Gastrocnemius medialis (tissue), 4 donors: ENCODE measurements at regions of chr2 and their contacts with region 1.

Region 1: DNA sequence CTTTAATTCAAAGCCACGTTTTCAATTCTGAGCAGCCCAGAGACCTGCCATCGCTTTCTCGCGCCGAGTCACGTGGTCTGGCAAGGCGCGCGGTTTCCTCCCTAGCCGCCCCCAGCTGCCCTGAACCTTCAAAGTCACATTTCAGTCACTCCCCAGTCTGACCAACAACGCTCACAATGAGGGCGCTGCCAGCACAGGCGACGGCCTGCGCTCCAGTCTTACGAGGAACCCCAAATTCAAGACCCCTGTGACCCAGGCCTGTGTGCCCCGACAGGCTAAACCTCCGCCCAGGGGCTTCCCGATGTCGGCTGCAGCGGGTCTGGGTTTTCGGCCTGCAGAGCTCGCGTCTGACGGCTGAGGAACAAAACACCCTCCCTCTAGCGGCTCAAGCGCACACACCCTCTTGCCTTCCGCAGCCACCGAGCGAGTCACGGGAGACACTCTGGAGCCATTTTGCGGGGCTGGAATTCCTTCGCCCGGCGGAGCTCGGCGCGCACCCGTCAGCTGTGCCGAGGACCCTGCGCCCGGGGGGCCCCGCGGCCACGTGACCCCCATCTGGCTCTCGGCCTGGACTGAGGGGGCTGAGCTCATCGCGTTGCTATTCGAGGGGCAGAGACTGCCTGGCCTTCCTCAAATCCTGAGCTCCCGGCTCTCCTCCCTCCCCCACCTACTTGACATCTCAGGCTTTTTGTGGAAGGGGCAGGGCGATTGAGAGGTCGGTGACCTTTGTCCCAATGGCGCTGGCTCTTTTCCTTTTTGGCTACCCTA is 69.9 kb upstream of the ITGB6 start:
- DNase-seq: peak; percentile 80 to 87
- ATAC-seq: peak; percentile 85 to 93
- H3K4me3 ChIP-seq: peak overlapping the region; percentile 62 to 84 (median 74)
- H3K27ac ChIP-seq: peak overlapping the region; percentile 93 to 99 (median 98)
- H3K4me1 ChIP-seq: peaks cover 11 to 24% of the 10 kb centered on the region in 2 donors
- H3K27me3 ChIP-seq: no peaks in the 10 kb centered on the region
- CTCF ChIP-seq: peak; percentile 69 to 88 (median 86)
- POLR2A ChIP-seq: peak; percentile 61 to 63

Region 2: DNA sequence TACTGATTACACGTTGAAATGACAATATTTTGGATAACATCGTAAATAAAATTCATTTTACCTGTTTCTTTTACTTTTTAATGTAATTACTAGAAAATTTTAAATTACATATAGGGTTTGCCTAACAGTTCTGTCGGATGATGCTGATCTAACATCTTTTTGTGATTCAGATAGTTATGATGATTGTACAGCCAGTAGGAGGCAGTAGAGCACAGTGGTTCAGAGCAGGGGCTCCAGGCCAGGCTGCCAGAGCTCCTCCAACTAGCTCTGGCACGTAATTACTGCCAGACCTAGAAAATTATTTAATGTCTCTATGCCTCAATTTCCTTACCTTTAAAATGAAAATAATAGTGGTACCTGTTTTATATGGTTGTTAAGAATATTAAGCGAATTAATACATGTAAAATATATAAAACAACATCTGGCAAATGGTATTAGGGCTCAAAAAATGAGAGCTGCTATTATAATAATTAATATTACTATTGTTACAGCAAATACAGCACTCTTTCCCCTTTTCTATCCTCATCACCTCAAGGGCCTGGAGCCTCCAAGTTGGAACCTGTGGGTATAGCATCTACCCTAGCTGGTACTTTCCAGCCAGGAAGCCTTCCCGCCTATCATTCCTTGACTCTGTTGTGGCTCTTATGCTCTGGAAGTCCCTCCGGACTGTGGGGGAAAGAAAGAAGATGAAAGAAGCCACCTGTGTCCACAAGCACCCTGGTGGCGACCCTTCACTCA is 159.9 kb before region 1 on chr2:
- in situ Hi-C with region 1: no loop called
- intact Hi-C with region 1: loop called (anchors 10 kb)
- DNase-seq: peak; percentile 28 to 62
- ATAC-seq: peak; percentile 88 to 97
- H3K4me3 ChIP-seq: no peak overlapping the region
- H3K27ac ChIP-seq: peak overlapping the region in 2 of 4 donors; percentile 6 to 44
- H3K4me1 ChIP-seq: no peaks in the 10 kb centered on the region
- H3K27me3 ChIP-seq: no peaks in the 10 kb centered on the region
- CTCF ChIP-seq: peak; percentile 65 to 86 (median 75)
- POLR2A ChIP-seq: no peak

Region 3: GRCh38 chr2:160207804-160208661 is 62.0 kb before region 1 on chr2:
- in situ Hi-C with region 1: no loop called
- intact Hi-C with region 1: loop called (anchors 2 kb)
- DNase-seq: peak; percentile 53 to 87
- ATAC-seq: peak; percentile 64 to 72
- H3K4me3 ChIP-seq: peak overlapping the region in 3 of 4 donors; percentile 20 to 39 (median 21)
- H3K27ac ChIP-seq: peak overlapping the region; percentile 78 to 88 (median 83)
- H3K4me1 ChIP-seq: peaks cover 36 to 37% of the 10 kb centered on the region in 2 donors
- H3K27me3 ChIP-seq: no peaks in the 10 kb centered on the region
- CTCF ChIP-seq: no peak
- POLR2A ChIP-seq: peak in 1 of 2 donors; percentile 27

Region 4: GRCh38 chr2:160221749-160222148 is 48.2 kb before region 1 on chr2:
- in situ Hi-C with region 1: no loop called
- intact Hi-C with region 1: no loop called
- DNase-seq: peak; percentile 31 to 61
- ATAC-seq: peak; percentile 32 to 42
- H3K4me3 ChIP-seq: no peak overlapping the region
- H3K27ac ChIP-seq: peak overlapping the region; percentile 83 to 93 (median 87)
- H3K4me1 ChIP-seq: peaks cover 71 to 72% of the 10 kb centered on the region in 2 donors
- H3K27me3 ChIP-seq: no peaks in the 10 kb centered on the region
- CTCF ChIP-seq: no peak
- POLR2A ChIP-seq: no peak

Region 5: GRCh38 chr2:160252278-160252887 is 17.6 kb before region 1 on chr2:
- in situ Hi-C with region 1: no loop called
- intact Hi-C with region 1: loop called (anchors 1 kb)
- DNase-seq: no peak
- ATAC-seq: peak; percentile 45
- H3K4me3 ChIP-seq: peak overlapping the region; percentile 38 to 54 (median 48)
- H3K27ac ChIP-seq: peak overlapping the region; percentile 67 to 87 (median 84)
- H3K4me1 ChIP-seq: peaks cover 51 to 60% of the 10 kb centered on the region in 2 donors
- H3K27me3 ChIP-seq: no peaks in the 10 kb centered on the region
- CTCF ChIP-seq: peak; percentile 69 to 93 (median 82)
- POLR2A ChIP-seq: no peak

Region 6: DNA sequence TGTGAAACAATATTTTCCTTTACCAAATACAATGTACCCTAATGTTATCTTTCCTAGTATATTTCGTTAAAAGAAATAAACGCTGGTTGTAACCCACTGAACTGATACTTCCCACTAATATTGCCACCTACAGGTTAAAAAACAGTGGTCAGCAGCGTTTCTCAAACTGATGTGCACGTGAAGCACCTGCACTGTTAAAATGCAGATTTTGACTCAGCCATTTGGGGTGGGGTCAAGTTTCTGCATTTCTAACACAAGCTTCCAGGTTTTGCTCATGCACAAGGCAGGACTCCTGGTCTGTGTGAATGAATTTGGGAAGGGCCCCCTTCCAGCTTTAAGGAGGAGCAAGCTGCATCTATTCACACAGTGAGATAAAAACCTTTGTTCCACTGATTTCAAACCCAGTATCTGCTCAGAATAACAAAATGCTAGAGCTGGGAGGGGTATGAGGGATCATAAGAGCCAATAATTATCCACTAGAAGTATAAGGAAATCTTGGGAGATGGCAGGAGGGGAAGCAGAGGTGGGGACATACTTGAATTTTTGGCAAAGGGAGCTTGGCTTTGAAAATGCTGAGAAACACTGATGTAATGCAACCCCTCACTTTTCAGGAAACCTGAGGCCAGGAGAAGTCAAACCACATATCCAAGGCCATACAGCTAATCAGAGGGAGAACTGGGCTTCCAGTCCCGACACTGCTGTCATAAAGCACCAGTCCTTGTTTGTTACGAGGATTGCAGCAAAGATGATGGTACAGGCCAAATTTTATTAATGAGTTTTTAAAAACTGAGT is 107.4 kb after region 1 on chr2:
- in situ Hi-C with region 1: no loop called
- intact Hi-C with region 1: no loop called
- DNase-seq: no peak
- ATAC-seq: no peak
- H3K4me3 ChIP-seq: no peak overlapping the region
- H3K27ac ChIP-seq: peak overlapping the region in 1 of 4 donors; percentile 4
- H3K4me1 ChIP-seq: peaks cover 91 to 98% of the 10 kb centered on the region in 2 donors
- H3K27me3 ChIP-seq: no peaks in the 10 kb centered on the region
- CTCF ChIP-seq: no peak
- POLR2A ChIP-seq: no peak

Region 7: GRCh38 chr2:160387558-160388262 is 117.7 kb after region 1 on chr2:
- in situ Hi-C with region 1: no loop called
- intact Hi-C with region 1: no loop called
- DNase-seq: peak; percentile 58 to 78
- ATAC-seq: peak; percentile 85 to 89
- H3K4me3 ChIP-seq: peak overlapping the region in 2 of 4 donors; percentile 14 to 26
- H3K27ac ChIP-seq: peak overlapping the region; percentile 68 to 76 (median 75)
- H3K4me1 ChIP-seq: peaks cover 48 to 63% of the 10 kb centered on the region in 2 donors
- H3K27me3 ChIP-seq: no peaks in the 10 kb centered on the region
- CTCF ChIP-seq: no peak
- POLR2A ChIP-seq: peak in 1 of 2 donors; percentile 8

Region 8: DNA sequence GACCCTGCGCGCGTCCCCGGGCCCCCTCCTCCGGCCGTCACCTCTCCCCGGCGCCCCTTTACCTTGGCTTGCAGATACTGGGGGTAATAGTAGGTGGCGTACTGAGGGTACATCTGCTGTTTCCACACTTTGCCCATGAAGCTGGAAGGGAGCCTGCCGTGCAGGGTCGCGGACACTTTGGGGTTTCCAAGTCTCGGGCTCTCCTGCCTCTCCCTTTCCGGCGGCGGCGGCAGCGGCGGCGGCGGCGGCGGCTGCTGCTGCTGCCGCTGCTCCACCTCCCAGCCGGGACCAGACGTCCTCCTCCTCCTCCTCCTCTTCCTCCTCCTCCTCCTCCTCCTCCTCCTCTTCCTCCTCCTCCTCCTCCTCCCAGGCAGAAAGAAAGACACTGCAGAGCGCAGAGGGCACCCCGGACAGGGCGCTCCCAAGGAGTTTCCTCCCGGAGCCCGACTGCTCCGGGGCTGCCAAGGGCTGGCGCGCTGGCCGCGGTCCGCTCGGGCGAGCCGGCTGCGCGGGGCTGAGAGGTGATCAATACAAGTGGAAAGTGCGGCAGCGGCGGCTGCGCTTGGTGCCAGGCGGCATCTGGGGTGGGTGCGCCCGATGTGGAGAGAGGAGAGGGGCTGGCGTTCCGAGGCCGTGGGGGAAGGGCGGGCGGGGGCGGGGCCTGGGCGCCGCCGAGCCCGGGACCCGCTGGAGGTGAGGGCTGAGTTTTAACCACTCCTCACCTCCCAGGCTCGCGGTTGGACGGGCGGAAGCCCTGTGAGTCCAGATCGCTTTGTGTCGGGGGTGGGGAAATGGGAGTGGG is 223.4 kb after region 1 on chr2 and contains the start of gene RBMS1:
- in situ Hi-C with region 1: no loop called
- intact Hi-C with region 1: loop called (anchors 5 kb)
- DNase-seq: peak; percentile 22 to 40
- ATAC-seq: peak; percentile 48 to 60
- H3K4me3 ChIP-seq: peak within 1 kb of the TSS; percentile 84 to 99 (median 98)
- H3K27ac ChIP-seq: peak within 1 kb of the TSS; percentile 87 to 97 (median 93)
- H3K4me1 ChIP-seq: peaks cover 18 to 20% of the 10 kb centered on the region in 2 donors
- H3K27me3 ChIP-seq: no peaks in the 10 kb centered on the region
- CTCF ChIP-seq: no peak
- POLR2A ChIP-seq: peak; percentile 3 to 5
- total RNA-seq, gene RBMS1: 13.0 to 24.5 (median 14.1) TPM

Region 9: GRCh38 chr2:160918906-160919503 is 649.0 kb after region 1 on chr2:
- in situ Hi-C with region 1: no loop called
- intact Hi-C with region 1: no loop called
- DNase-seq: peak in 1 of 2 donors; percentile 17
- ATAC-seq: no peak
- H3K4me3 ChIP-seq: no peak overlapping the region
- H3K27ac ChIP-seq: no peak overlapping the region
- H3K4me1 ChIP-seq: peaks cover 9 to 14% of the 10 kb centered on the region in 2 donors
- H3K27me3 ChIP-seq: no peaks in the 10 kb centered on the region
- CTCF ChIP-seq: peak in 2 of 5 experiments; percentile 36 to 44
- POLR2A ChIP-seq: no peak